ENCODE measurements at regions of chr12 and their contacts with region 1.

Region 1: GRCh38 chr12:26732005-26732908 is 100.7 kb downstream of the ITPR2 start:
- DNase-seq: no peak
- ATAC-seq: no peak
- H3K4me3 ChIP-seq: no peak overlapping the region
- H3K27ac ChIP-seq: peak overlapping the region; percentile 52
- H3K4me1 ChIP-seq: peaks cover 99% of the 10 kb centered on the region
- H3K27me3 ChIP-seq: no peaks in the 10 kb centered on the region
- CTCF ChIP-seq: no peak
- EP300 ChIP-seq: no peak
- POLR2A ChIP-seq: no peak
- RAD21 ChIP-seq: no peak

Region 2: GRCh38 chr12:26746121-26746714 is 14.0 kb after region 1 on chr12:
- CTCF ChIA-PET with region 1: no interaction called
- POLR2A ChIA-PET with region 1: interaction called, 61 read pairs
- in situ Hi-C with region 1: no loop called
- intact Hi-C with region 1: loop called (anchors 1 kb)
- DNase-seq: no peak
- ATAC-seq: no peak
- H3K4me3 ChIP-seq: no peak overlapping the region; a peak in 1 of 6 replicates
- H3K27ac ChIP-seq: peak overlapping the region; percentile 94
- H3K4me1 ChIP-seq: peaks cover 100% of the 10 kb centered on the region
- H3K27me3 ChIP-seq: no peaks in the 10 kb centered on the region; a peak in 1 of 5 replicates
- CTCF ChIP-seq: no peak
- EP300 ChIP-seq: no peak
- POLR2A ChIP-seq: no peak
- RAD21 ChIP-seq: no peak

Region 3: GRCh38 chr12:26777236-26777635 is 45.0 kb after region 1 on chr12:
- CTCF ChIA-PET with region 1: no interaction called
- POLR2A ChIA-PET with region 1: interaction called, 13 read pairs
- in situ Hi-C with region 1: no loop called
- intact Hi-C with region 1: no loop called
- DNase-seq: no peak
- ATAC-seq: no peak
- H3K4me3 ChIP-seq: no peak overlapping the region
- H3K27ac ChIP-seq: no peak overlapping the region
- H3K4me1 ChIP-seq: peaks cover 51% of the 10 kb centered on the region
- H3K27me3 ChIP-seq: no peaks in the 10 kb centered on the region
- CTCF ChIP-seq: no peak
- EP300 ChIP-seq: no peak
- POLR2A ChIP-seq: no peak
- RAD21 ChIP-seq: no peak

Region 4: GRCh38 chr12:27083861-27084394 is 351.7 kb after region 1 on chr12:
- CTCF ChIA-PET with region 1: no interaction called
- POLR2A ChIA-PET with region 1: no interaction called
- in situ Hi-C with region 1: no loop called
- intact Hi-C with region 1: no loop called
- DNase-seq: no peak
- ATAC-seq: no peak
- H3K4me3 ChIP-seq: no peak overlapping the region
- H3K27ac ChIP-seq: no peak overlapping the region
- H3K4me1 ChIP-seq: no peaks in the 10 kb centered on the region
- H3K27me3 ChIP-seq: no peaks in the 10 kb centered on the region
- CTCF ChIP-seq: no peak
- EP300 ChIP-seq: no peak
- POLR2A ChIP-seq: no peak
- RAD21 ChIP-seq: no peak

Measured in HepG2 (cell line).